ENCODE measurements at regions of chr2 and their contacts with region 1.

Region 1: GRCh38 chr2:101387151-101387807 is at the start of gene CREG2:
- DNase-seq: peak; percentile 9 to 73 (median 47)
- ATAC-seq: peak; percentile 82 to 92 (median 90)
- H3K4me3 ChIP-seq: peak within 1 kb of the TSS; percentile 34 to 87
- H3K4me3 Mint-ChIP-seq: peak within 1 kb of the TSS; percentile 55 to 75 (median 74)
- H3K27ac ChIP-seq: no peak within 1 kb of the TSS
- H3K27ac Mint-ChIP-seq: no peak within 1 kb of the TSS
- H3K4me1 ChIP-seq: peaks cover 2 to 15% of the 10 kb centered on the region in 2 experiments
- H3K4me1 Mint-ChIP-seq: peaks cover 4 to 14% (median 13%) of the 10 kb centered on the region in 3 donors
- H3K27me3 ChIP-seq: peaks cover 6 to 42% of the 10 kb centered on the region in 2 experiments
- H3K27me3 Mint-ChIP-seq: peaks cover 32 to 68% of the 10 kb centered on the region in 2 donors
- total RNA-seq, gene CREG2: 0.13 TPM in 1 of 5 donors, not detected in the others

Region 2: DNA sequence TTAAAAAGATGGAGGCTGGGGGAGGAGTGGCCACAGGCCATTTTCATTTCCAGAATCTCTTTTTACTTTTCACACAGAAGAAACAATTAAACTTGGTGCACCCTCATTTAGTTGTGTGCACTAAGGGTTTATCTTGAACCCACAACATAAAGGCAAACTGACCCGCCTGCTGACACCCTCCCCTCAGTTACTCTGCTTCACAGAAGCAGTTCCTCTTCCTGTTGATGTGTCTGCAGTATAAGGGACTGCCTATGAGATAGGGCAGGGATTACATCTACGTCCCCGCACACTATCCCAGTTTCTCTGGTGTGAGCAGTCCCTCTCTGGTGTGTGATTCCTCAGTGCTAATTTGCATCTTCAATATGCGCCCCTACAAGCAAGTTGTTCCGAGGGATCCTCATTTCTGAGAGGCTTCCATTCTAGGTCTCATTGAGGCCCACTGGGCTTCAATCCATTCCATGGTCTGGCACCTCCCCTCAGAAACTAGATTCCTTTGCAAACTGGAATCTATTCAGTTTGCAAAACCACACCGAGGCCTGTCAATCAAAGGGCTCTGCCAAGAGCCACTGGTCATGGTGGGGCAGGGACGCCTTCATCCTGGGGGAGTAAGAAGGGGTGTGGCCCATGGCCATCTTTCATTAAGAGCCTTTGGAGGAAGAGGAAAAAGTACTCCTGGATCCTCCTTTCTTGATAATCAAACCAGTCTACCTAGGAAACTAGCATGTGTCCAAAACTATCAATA is 12.3 kb before region 1 on chr2:
- CTCF ChIA-PET with region 1: interaction called in 1 of 2 experiments, 15 read pairs
- POLR2A ChIA-PET with region 1: no interaction called
- DNase-seq: no peak
- ATAC-seq: peak in 2 of 4 experiments; percentile 37 to 56
- H3K4me3 ChIP-seq: no peak overlapping the region
- H3K4me3 Mint-ChIP-seq: no peak overlapping the region
- H3K27ac ChIP-seq: no peak overlapping the region
- H3K27ac Mint-ChIP-seq: peak overlapping the region; percentile 11 to 75
- H3K4me1 ChIP-seq: peaks cover 5 to 7% of the 10 kb centered on the region in 2 experiments
- H3K4me1 Mint-ChIP-seq: peaks cover 9 to 25% (median 18%) of the 10 kb centered on the region in 3 donors
- H3K27me3 ChIP-seq: peaks cover 0 to 6% of the 10 kb centered on the region in 2 experiments
- H3K27me3 Mint-ChIP-seq: no peaks in the 10 kb centered on the region

Region 3: GRCh38 chr2:102418421-102418961 is 1031.2 kb after region 1 on chr2:
- CTCF ChIA-PET with region 1: no interaction called
- POLR2A ChIA-PET with region 1: no interaction called
- DNase-seq: peak in 2 of 35 experiments; percentile 5 to 66
- ATAC-seq: peak; percentile 74 to 90 (median 85)
- H3K4me3 ChIP-seq: peak overlapping the region in 1 of 2 donors; percentile 39
- H3K4me3 Mint-ChIP-seq: peak overlapping the region; percentile 59 to 81 (median 62)
- H3K27ac ChIP-seq: peak overlapping the region; percentile 75
- H3K27ac Mint-ChIP-seq: peak overlapping the region; percentile 89 to 94
- H3K4me1 ChIP-seq: peaks cover 30 to 43% of the 10 kb centered on the region in 2 experiments
- H3K4me1 Mint-ChIP-seq: peaks cover 62 to 68% (median 64%) of the 10 kb centered on the region in 3 donors
- H3K27me3 ChIP-seq: no peaks in the 10 kb centered on the region
- H3K27me3 Mint-ChIP-seq: no peaks in the 10 kb centered on the region